GM18951 (cell line): ENCODE measurements at regions of chr2 and their contacts with region 1.

Region 1: DNA sequence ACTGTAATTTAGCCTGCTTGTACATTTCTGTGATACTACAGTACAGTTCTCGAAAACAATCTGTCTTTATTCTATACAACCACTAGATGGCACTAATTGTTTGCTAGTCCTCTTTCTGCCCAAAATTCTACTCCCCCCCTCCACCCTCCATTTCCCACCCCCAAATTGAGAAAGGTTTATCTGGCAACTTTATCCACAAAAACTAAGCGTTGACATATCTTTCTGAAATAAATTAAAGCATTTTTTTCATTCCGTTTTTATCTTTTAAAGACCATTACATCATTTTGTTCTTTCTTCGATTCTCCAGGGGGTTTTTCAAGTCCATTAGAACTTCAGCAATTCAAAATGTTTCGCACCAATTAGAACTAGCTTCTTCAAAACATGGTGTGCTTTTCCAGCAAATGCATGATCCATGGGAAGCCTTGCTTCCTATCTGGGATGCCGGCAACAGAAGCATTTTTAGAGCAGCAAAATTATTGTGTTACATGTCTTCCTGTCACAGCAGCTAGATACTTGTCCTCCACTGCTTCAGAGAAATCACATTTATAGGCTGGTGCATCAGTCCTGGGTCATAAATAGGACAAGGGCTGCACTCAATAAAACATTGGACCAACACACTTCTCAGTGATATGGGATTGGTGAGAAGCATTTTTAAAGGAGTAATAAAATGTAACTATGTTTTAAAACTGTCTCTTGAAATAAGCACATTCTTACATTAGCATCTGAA is 241.3 kb downstream of the PAX3 start:
- POLR2A ChIP-seq: no peak

Region 2: GRCh38 chr2:222290736-222291484 is 233.4 kb after region 1 on chr2:
- in situ Hi-C with region 1: loop called (anchors 10 kb)
- POLR2A ChIP-seq: no peak

Region 3: GRCh38 chr2:222561817-222562645 is 504.5 kb after region 1 on chr2:
- in situ Hi-C with region 1: loop called (anchors 25 kb)
- POLR2A ChIP-seq: no peak

Region 4: GRCh38 chr2:222774968-222775367 is 717.5 kb after region 1 on chr2:
- in situ Hi-C with region 1: no loop called
- POLR2A ChIP-seq: no peak